ENCODE measurements at regions of chr13 and their contacts with region 1.

Region 1: GRCh38 chr13:48562296-48563066 is 29.6 kb upstream of the RCBTB2 start:
- DNase-seq: peak; percentile 94
- H3K4me3 Mint-ChIP-seq: peak overlapping the region; percentile 14
- H3K27ac Mint-ChIP-seq: peak overlapping the region; percentile 62
- H3K4me1 Mint-ChIP-seq: peaks cover 40% of the 10 kb centered on the region
- H3K27me3 Mint-ChIP-seq: peaks cover 59% of the 10 kb centered on the region

Region 2: DNA sequence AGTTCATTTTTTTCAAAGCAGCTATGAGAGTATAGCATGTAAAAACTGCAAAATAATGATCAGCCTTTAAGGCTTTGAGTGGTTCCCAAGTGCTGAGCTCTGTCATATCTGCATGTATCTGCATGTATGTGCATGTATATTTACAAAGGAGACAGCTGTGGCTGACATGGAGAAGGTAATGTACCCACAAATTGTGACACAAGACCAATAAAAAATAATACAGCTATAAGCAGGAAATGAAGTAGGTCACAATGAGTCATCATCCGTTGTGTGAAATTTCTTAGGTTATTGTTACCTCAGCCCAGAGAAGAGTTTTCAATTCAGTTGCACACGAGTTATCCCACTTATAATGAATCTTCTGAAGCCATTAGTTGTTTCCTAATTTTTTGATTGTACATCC is 406.6 kb before region 1 on chr13:
- intact Hi-C with region 1: loop called (anchors 10 kb)
- DNase-seq: peak; percentile 80
- H3K4me3 Mint-ChIP-seq: peak overlapping the region; percentile 44
- H3K27ac Mint-ChIP-seq: peak overlapping the region; percentile 87
- H3K4me1 Mint-ChIP-seq: peaks cover 59% of the 10 kb centered on the region
- H3K27me3 Mint-ChIP-seq: no peaks in the 10 kb centered on the region

Region 3: GRCh38 chr13:48346583-48346982 is 215.9 kb before region 1 on chr13:
- intact Hi-C with region 1: loop called (anchors 5 kb)
- DNase-seq: no peak
- H3K4me3 Mint-ChIP-seq: no peak overlapping the region
- H3K27ac Mint-ChIP-seq: no peak overlapping the region
- H3K4me1 Mint-ChIP-seq: peaks cover 8% of the 10 kb centered on the region
- H3K27me3 Mint-ChIP-seq: no peaks in the 10 kb centered on the region

Region 4: GRCh38 chr13:48492470-48493065 is 69.9 kb before region 1 on chr13:
- intact Hi-C with region 1: loop called (anchors 2 kb)
- DNase-seq: peak; percentile 91
- H3K4me3 Mint-ChIP-seq: no peak overlapping the region
- H3K27ac Mint-ChIP-seq: no peak overlapping the region
- H3K4me1 Mint-ChIP-seq: peaks cover 47% of the 10 kb centered on the region
- H3K27me3 Mint-ChIP-seq: no peaks in the 10 kb centered on the region

Region 5: GRCh38 chr13:48532506-48533499 is 29.7 kb before region 1 on chr13 and contains the start of gene RCBTB2:
- intact Hi-C with region 1: loop called (anchors 1 kb)
- DNase-seq: peak; percentile 100
- H3K4me3 Mint-ChIP-seq: peak within 1 kb of the TSS; percentile 87
- H3K27ac Mint-ChIP-seq: peak within 1 kb of the TSS; percentile 96
- H3K4me1 Mint-ChIP-seq: peaks cover 26% of the 10 kb centered on the region
- H3K27me3 Mint-ChIP-seq: peaks cover 15% of the 10 kb centered on the region
- total RNA-seq, gene RCBTB2: 1.6 and 1.7 TPM in 2 replicates

Region 6: GRCh38 chr13:49292742-49293486 is 730.4 kb after region 1 on chr13:
- intact Hi-C with region 1: no loop called
- DNase-seq: peak; percentile 63
- H3K4me3 Mint-ChIP-seq: no peak overlapping the region
- H3K27ac Mint-ChIP-seq: peak overlapping the region; percentile 4
- H3K4me1 Mint-ChIP-seq: peaks cover 5% of the 10 kb centered on the region
- H3K27me3 Mint-ChIP-seq: no peaks in the 10 kb centered on the region

Measured in activated CD4-positive, alpha-beta T cell treated with anti-CD3 and anti-CD28 coated beads, Interleukin-2, amount 10 ng/mL, durations not matched to agents 24 days and 14 days (primary cell).